GM12878 (cell line): ENCODE measurements at regions of chr6 and their contacts with region 1.

Region 1: GRCh38 chr6:149431905-149432775 is 32.1 kb downstream of the SUMO4 start:
- DNase-seq: peak; percentile 60
- ATAC-seq: peak; percentile 99
- H3K4me3 ChIP-seq: no peak overlapping the region
- H3K27ac ChIP-seq: no peak overlapping the region
- H3K4me1 ChIP-seq: no peaks in the 10 kb centered on the region
- H3K27me3 ChIP-seq: no peaks in the 10 kb centered on the region; a peak in 1 of 4 replicates
- CTCF ChIP-seq: peak; percentile 87 to 95 (median 93)
- EP300 ChIP-seq: no peak
- POLR2A ChIP-seq: no peak
- RAD21 ChIP-seq: peak; percentile 94

Region 2: DNA sequence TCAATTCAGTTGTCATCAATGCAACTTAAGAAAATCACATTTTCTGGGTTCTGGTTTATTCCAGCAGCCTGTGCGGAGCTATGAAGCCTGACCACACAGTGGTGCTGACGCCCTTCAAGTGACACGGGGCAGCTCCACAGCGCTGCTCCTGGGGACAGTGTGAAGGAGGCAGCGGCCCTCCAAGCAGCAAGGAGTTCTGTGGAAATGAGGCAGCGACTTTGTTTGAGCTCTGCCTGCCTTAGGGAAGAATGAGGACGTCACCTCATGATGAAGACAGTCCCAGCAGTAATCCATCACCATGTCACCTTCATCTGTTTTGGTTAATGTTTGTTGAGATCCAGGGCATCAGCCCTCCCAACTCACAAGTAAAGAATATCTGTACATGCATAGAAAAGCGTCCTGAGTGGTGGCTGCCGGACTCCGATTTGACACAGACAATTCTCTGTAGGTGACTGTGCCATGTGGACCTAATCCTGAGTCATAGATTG is 853.9 kb before region 1 on chr6:
- CTCF ChIA-PET with region 1: interaction called, 15 read pairs
- POLR2A ChIA-PET with region 1: no interaction called
- RAD21 ChIA-PET with region 1: interaction called, 20 read pairs
- SMC1A ChIA-PET with region 1: interaction called, 12 read pairs
- in situ Hi-C with region 1: loop called (anchors 5 kb)
- intact Hi-C with region 1: loop called (anchors 5 kb)
- DNase-seq: no peak
- ATAC-seq: peak; percentile 100
- H3K4me3 ChIP-seq: no peak overlapping the region
- H3K27ac ChIP-seq: no peak overlapping the region
- H3K4me1 ChIP-seq: no peaks in the 10 kb centered on the region
- H3K27me3 ChIP-seq: peaks cover 0 to 2% of the 10 kb centered on the region in 2 experiments; a peak in 2 of 4 replicates
- CTCF ChIP-seq: peak; percentile 96 to 99 (median 98); a peak in 5 of 6 replicates
- EP300 ChIP-seq: no peak
- POLR2A ChIP-seq: no peak
- RAD21 ChIP-seq: peak; percentile 99

Region 3: DNA sequence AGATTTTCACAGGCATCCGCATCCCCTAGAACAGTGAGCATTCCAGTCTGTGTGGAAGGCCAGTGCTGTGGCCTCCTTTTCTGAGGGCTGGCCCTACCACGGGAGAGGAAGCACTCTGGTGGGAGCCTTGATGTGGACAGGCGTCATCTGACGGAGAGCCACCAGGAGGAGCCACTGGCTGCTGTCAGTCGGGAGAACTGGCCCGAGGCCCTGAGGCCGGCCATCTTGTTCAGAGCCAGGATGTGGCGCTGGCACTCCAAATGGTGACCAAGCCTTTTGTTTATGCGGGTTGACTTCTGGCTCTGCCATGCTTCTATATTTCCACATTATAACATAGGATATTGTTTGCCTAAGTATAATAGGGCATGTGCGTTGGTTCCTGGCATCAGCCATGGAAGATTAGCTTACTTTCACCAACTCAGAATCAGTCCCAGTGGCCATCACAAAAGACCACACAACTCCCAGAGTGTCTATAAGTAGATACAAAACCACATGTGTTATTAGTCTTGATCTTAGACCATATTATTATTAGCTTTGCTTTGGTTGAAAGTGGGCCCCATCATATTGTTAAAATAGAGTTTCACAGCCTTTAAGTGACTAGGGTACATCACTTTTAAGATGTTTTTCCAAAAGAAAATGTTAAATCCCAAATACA is 388.5 kb before region 1 on chr6:
- CTCF ChIA-PET with region 1: interaction called, 34 read pairs
- POLR2A ChIA-PET with region 1: no interaction called
- RAD21 ChIA-PET with region 1: interaction called, 15 read pairs
- SMC1A ChIA-PET with region 1: interaction called, 22 read pairs
- in situ Hi-C with region 1: no loop called
- intact Hi-C with region 1: no loop called
- DNase-seq: no peak
- ATAC-seq: peak; percentile 43
- H3K4me3 ChIP-seq: no peak overlapping the region
- H3K27ac ChIP-seq: no peak overlapping the region
- H3K4me1 ChIP-seq: peaks cover 46% of the 10 kb centered on the region
- H3K27me3 ChIP-seq: no peaks in the 10 kb centered on the region
- CTCF ChIP-seq: peak; percentile 45 to 62 (median 45)
- EP300 ChIP-seq: no peak
- POLR2A ChIP-seq: no peak
- RAD21 ChIP-seq: peak; percentile 53; the same call in 1 of the 2 replicates

Region 4: DNA sequence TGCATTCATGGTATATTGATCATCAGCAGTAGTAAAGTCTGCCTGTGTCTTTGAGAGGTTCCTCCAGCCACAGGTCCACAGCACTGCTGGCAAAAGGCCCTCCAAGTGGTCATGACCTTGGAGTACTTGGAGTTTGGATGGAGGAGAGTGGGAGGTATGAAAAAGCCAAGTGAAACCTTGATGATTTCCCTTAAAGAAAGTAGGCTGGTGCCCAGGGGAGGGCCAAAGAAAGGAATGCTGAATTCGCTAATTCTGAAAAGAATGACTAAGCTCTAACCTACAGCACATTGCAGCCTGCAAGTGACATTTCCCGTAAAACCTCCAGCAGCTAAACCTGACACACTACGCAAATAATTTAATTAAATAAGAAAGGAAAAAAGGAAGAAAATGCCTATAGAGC is 338.0 kb before region 1 on chr6:
- CTCF ChIA-PET with region 1: interaction called, 138 read pairs
- POLR2A ChIA-PET with region 1: no interaction called
- RAD21 ChIA-PET with region 1: interaction called, 8 read pairs
- SMC1A ChIA-PET with region 1: interaction called, 74 read pairs
- in situ Hi-C with region 1: no loop called
- intact Hi-C with region 1: no loop called
- DNase-seq: no peak
- ATAC-seq: no peak
- H3K4me3 ChIP-seq: no peak overlapping the region
- H3K27ac ChIP-seq: no peak overlapping the region
- H3K4me1 ChIP-seq: peaks cover 4% of the 10 kb centered on the region; the same call in 1 of the 2 replicates
- H3K27me3 ChIP-seq: no peaks in the 10 kb centered on the region
- CTCF ChIP-seq: no peak
- EP300 ChIP-seq: no peak
- POLR2A ChIP-seq: no peak
- RAD21 ChIP-seq: no peak

Region 5: DNA sequence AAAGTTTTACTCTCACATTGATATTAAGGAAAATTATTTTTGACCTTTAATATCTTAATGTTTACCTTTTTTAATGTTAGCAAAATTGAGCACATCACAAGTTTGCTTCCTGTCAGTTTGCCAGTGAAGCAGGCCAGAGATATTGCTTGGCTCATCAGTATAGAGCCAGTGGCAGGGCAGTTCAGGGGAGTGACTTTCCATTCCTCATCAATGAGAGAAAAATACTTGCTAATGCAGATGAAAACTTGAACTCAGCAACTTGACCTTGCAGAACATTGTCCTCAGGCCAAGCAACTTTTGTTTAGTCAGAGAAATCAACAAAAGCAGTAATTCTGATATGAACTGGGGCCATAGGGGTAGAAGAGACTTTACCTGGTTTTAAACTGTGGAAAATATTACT is 107.7 kb before region 1 on chr6:
- CTCF ChIA-PET with region 1: interaction called, 10 read pairs
- POLR2A ChIA-PET with region 1: no interaction called
- RAD21 ChIA-PET with region 1: interaction called, 4 read pairs
- SMC1A ChIA-PET with region 1: interaction called, 11 read pairs
- in situ Hi-C with region 1: no loop called
- intact Hi-C with region 1: loop called (anchors 5 kb)
- DNase-seq: no peak
- ATAC-seq: peak; percentile 28; the same call in 2 of the 3 replicates
- H3K4me3 ChIP-seq: no peak overlapping the region
- H3K27ac ChIP-seq: no peak overlapping the region
- H3K4me1 ChIP-seq: peaks cover 10% of the 10 kb centered on the region
- H3K27me3 ChIP-seq: no peaks in the 10 kb centered on the region
- CTCF ChIP-seq: no peak
- EP300 ChIP-seq: no peak
- POLR2A ChIP-seq: no peak
- RAD21 ChIP-seq: no peak

Region 6: GRCh38 chr6:149484733-149485700 is 52.9 kb after region 1 on chr6 and contains the start of gene ZC3H12D:
- CTCF ChIA-PET with region 1: interaction called, 7 read pairs
- POLR2A ChIA-PET with region 1: interaction called, 7 read pairs
- RAD21 ChIA-PET with region 1: interaction called, 7 read pairs
- SMC1A ChIA-PET with region 1: interaction called, 14 read pairs
- in situ Hi-C with region 1: no loop called
- intact Hi-C with region 1: no loop called
- DNase-seq: no peak
- ATAC-seq: peak; percentile 65
- H3K4me3 ChIP-seq: peak within 1 kb of the TSS; percentile 71
- H3K27ac ChIP-seq: peak within 1 kb of the TSS; percentile 95
- H3K4me1 ChIP-seq: peaks cover 41% of the 10 kb centered on the region
- H3K27me3 ChIP-seq: no peaks in the 10 kb centered on the region
- CTCF ChIP-seq: peak; percentile 55 to 61 (median 56)
- EP300 ChIP-seq: peak; percentile 37 to 74; a peak in 3 of 4 replicates
- POLR2A ChIP-seq: peak; percentile 70
- RAD21 ChIP-seq: peak; percentile 45
- polyA plus RNA-seq, gene ZC3H12D: 1.4 to 2.0 TPM

Region 7: DNA sequence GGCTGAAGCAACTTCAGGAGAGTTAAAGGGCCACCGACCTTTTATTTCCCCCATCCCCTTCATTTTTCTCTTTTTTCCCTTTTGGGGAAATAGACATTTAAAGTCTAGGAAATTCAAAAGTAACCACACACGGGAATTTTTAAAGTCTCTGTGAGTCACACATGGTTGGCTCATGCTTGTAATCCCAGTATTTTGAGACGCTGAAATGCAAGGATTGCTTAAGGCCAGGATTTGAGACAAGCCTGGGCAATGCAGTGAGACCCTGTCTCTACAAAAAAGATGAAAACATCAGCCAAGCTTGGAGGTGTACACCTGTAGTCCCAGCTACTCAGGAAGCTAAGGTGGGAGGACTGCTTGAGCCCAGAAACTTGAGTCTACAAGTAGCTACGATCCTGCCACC is 182.2 kb after region 1 on chr6:
- CTCF ChIA-PET with region 1: no interaction called
- POLR2A ChIA-PET with region 1: no interaction called
- RAD21 ChIA-PET with region 1: no interaction called
- SMC1A ChIA-PET with region 1: no interaction called
- in situ Hi-C with region 1: no loop called
- intact Hi-C with region 1: no loop called
- DNase-seq: no peak
- ATAC-seq: no peak
- H3K4me3 ChIP-seq: no peak overlapping the region
- H3K27ac ChIP-seq: no peak overlapping the region
- H3K4me1 ChIP-seq: no peaks in the 10 kb centered on the region
- H3K27me3 ChIP-seq: no peaks in the 10 kb centered on the region
- CTCF ChIP-seq: no peak
- EP300 ChIP-seq: no peak
- POLR2A ChIP-seq: no peak
- RAD21 ChIP-seq: no peak

Region 8: DNA sequence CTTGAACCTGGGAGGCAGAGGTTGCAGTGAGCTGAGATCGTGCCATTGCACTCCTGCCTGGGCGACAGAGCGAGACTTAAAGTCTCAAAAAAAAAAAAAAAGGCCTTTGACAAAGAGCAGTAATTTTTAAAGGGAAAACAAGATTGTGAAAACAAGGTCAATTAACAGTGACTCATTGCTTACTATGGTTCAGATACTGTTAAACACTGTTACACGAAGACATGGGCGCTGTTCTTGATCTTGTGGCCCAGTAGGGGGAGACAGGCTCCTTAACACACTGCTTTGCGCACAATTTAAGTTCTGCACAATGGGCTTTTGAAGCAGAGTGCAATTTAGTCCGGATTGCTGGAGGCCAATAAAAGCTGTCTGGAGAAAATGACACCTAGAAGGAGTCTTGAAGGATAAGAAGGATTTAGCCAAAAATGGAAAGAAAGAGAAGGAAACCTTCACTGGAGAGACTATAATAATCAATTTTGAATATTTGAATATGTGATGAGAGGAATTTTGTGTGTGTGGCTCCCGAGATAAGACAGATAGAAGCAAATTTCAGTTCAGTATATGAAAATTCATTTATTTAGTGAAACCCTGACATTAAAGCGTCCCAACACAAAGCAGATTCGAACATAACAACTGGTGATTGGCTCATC is 291.8 kb after region 1 on chr6:
- CTCF ChIA-PET with region 1: no interaction called
- POLR2A ChIA-PET with region 1: no interaction called
- RAD21 ChIA-PET with region 1: no interaction called
- SMC1A ChIA-PET with region 1: no interaction called
- in situ Hi-C with region 1: no loop called
- intact Hi-C with region 1: no loop called
- DNase-seq: no peak
- ATAC-seq: peak; percentile 91
- H3K4me3 ChIP-seq: no peak overlapping the region
- H3K27ac ChIP-seq: no peak overlapping the region
- H3K4me1 ChIP-seq: no peaks in the 10 kb centered on the region
- H3K27me3 ChIP-seq: no peaks in the 10 kb centered on the region
- CTCF ChIP-seq: peak; percentile 73 to 76 (median 73)
- EP300 ChIP-seq: no peak
- POLR2A ChIP-seq: no peak
- RAD21 ChIP-seq: peak; percentile 68